ENCODE measurements at regions of chr2 and their contacts with region 1.

Region 1: DNA sequence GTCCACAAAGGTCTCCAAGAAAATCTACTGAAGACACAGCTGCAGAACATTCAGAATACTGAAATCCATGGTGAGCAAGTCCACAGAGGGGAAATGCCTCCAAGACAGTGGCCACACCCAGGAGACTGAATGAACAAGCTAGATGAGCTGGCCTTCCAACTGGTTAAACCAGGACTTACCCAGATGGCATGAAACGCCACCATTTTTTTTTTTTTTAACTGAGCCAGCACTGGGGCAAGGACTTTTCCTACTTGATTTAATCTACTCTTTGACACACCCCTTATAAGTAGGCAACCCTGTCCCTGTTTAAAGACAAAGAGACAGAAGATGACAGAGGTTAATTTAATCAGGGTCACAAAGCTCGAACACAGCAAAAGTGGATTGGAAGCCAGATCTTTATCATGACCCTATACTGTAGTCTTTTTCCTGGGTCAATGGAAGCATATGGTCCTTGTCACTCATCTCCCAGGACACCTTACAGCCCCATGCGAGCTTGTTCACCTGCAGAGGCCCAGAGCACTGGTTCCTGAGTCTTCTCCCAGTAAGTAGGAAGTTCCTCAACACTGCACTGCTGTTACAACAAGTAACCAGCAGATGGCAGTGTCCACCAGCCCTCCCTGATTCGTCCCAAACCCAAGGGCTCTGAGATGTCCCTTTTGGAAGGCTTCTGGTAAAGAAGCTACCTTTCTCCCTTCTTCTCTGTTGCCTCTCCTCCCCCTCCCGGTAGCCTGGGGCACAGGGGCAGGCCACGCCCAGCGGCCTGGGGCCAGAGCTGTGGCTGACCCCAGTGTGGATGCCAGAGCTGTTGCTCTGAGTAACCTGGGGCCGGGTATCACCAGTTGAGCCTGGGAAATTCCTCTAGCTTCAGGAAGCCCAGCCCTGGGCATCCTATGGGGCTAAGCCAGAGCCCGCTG is 5.6 kb upstream of the GDF7 start:
- DNase-seq: peak in 4 of 5 donors; percentile 64 to 69 (median 68)
- H3K4me3 ChIP-seq: no peak overlapping the region
- H3K4me3 Mint-ChIP-seq: peak overlapping the region in 1 of 8 donors; percentile 43
- H3K27ac ChIP-seq: no peak overlapping the region
- H3K27ac Mint-ChIP-seq: peak overlapping the region in 1 of 7 donors; percentile 25
- H3K4me1 ChIP-seq: peaks cover 12% of the 10 kb centered on the region
- H3K4me1 Mint-ChIP-seq: peaks cover 3 to 14% (median 10%) of the 10 kb centered on the region in 4 donors
- H3K27me3 ChIP-seq: peaks cover 26% of the 10 kb centered on the region
- H3K27me3 Mint-ChIP-seq: peaks cover 43 to 49% of the 10 kb centered on the region in 2 donors

Region 2: GRCh38 chr2:20573620-20574422 is 87.5 kb before region 1 on chr2:
- CTCF ChIA-PET with region 1: interaction called, 12 read pairs
- POLR2A ChIA-PET with region 1: no interaction called
- intact Hi-C with region 1: no loop called
- DNase-seq: no peak
- H3K4me3 ChIP-seq: no peak overlapping the region
- H3K4me3 Mint-ChIP-seq: no peak overlapping the region
- H3K27ac ChIP-seq: no peak overlapping the region
- H3K27ac Mint-ChIP-seq: peak overlapping the region in 4 of 7 donors; percentile 19 to 79 (median 62)
- H3K4me1 ChIP-seq: peaks cover 18% of the 10 kb centered on the region
- H3K4me1 Mint-ChIP-seq: peaks cover 11 to 17% (median 14%) of the 10 kb centered on the region in 4 donors
- H3K27me3 ChIP-seq: no peaks in the 10 kb centered on the region
- H3K27me3 Mint-ChIP-seq: no peaks in the 10 kb centered on the region

Region 3: DNA sequence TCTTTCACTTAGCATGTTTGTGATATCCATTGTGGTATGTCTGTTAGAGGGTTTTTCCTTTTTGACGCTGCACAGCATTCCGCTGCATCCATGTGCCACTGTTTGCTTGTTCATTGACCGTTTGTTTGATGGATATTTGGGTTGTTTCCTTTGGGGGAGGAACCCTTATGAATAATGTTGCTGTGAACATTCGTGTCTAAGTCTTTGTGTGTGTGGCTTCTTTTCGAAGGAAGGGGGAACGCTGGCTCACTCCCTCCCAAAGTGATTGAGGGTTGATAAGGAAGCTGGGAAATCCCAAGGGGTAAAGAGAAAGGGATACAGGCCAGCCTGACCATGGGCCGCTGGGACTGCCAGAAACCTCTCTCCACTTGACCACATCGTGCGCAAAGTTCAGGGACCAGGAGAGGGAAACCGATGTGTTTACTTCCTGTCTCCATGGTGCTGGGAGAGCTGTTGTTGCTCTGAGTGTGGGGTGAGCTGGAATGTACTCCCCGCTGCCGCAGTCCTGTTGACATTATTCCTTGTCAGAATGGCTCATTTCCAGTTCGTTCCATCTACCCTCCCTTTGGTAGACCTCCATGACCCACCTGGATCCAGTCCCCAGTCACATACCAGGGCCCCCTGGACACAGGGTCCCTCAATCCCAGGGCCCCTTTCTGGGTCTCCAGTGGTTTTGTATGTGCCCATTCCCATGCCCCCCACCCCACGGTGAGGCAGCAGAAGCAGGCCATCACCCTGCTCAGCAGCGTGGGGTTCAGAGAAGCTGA is 50.1 kb before region 1 on chr2:
- CTCF ChIA-PET with region 1: no interaction called
- POLR2A ChIA-PET with region 1: no interaction called
- intact Hi-C with region 1: no loop called
- DNase-seq: no peak
- H3K4me3 ChIP-seq: no peak overlapping the region
- H3K4me3 Mint-ChIP-seq: no peak overlapping the region
- H3K27ac ChIP-seq: no peak overlapping the region
- H3K27ac Mint-ChIP-seq: no peak overlapping the region
- H3K4me1 ChIP-seq: no peaks in the 10 kb centered on the region
- H3K4me1 Mint-ChIP-seq: no peaks in the 10 kb centered on the region
- H3K27me3 ChIP-seq: no peaks in the 10 kb centered on the region
- H3K27me3 Mint-ChIP-seq: no peaks in the 10 kb centered on the region

Region 4: DNA sequence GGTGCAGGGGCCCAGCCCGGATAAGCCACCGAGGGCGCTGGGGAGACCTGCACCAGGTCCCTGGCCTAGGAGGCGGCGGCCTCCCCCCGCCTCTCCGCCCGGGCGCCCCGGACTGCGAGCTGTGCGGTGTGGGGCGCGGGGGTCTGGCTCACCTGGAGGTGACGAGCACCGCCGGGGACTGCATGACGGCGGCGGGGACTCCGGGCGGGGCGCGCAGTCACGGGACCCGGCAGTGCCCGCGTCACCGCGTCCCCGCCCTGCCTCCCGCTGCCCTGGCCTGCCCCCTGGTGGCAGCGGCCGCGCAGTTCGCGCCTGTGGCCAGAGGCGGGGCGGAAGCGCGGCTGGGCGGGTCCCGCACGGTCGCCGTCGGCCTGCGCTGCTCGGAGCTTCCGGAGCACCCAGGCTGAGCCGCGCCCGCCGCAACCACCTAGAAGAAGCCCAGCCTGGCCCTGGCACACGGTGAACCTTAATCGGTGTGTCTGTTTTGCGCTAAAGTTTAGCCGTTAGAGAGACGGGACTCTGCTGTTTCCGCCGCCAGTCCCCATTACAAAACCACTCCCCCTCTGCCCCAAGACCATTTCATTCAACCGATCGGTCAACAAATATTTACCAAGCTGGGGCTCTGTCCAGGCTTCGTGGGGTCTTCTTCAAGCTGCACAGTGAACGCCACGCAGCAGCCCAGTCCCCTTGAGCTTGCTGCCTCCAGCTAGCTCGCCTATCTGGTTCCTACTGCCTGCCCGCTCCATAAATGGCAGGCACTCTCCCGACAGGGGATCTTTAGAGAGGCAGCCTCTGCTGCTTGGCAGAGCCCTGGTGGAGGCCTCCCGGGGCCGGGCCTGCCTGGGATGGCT is 10.2 kb before region 1 on chr2 and contains the start of gene HS1BP3:
- CTCF ChIA-PET with region 1: interaction called, 76 read pairs
- POLR2A ChIA-PET with region 1: interaction called, 27 read pairs
- intact Hi-C with region 1: no loop called
- DNase-seq: peak; percentile 88 to 98 (median 94)
- H3K4me3 ChIP-seq: peak within 1 kb of the TSS; percentile 50 to 87
- H3K4me3 Mint-ChIP-seq: peak within 1 kb of the TSS; percentile 87 to 93 (median 90)
- H3K27ac ChIP-seq: peak within 1 kb of the TSS; percentile 89
- H3K27ac Mint-ChIP-seq: peak within 1 kb of the TSS; percentile 92 to 98 (median 97)
- H3K4me1 ChIP-seq: peaks cover 20% of the 10 kb centered on the region
- H3K4me1 Mint-ChIP-seq: peaks cover 22 to 42% (median 36%) of the 10 kb centered on the region in 4 donors
- H3K27me3 ChIP-seq: no peaks in the 10 kb centered on the region
- H3K27me3 Mint-ChIP-seq: no peaks in the 10 kb centered on the region
- total RNA-seq, gene HS1BP3: 20.1 TPM

Region 5: DNA sequence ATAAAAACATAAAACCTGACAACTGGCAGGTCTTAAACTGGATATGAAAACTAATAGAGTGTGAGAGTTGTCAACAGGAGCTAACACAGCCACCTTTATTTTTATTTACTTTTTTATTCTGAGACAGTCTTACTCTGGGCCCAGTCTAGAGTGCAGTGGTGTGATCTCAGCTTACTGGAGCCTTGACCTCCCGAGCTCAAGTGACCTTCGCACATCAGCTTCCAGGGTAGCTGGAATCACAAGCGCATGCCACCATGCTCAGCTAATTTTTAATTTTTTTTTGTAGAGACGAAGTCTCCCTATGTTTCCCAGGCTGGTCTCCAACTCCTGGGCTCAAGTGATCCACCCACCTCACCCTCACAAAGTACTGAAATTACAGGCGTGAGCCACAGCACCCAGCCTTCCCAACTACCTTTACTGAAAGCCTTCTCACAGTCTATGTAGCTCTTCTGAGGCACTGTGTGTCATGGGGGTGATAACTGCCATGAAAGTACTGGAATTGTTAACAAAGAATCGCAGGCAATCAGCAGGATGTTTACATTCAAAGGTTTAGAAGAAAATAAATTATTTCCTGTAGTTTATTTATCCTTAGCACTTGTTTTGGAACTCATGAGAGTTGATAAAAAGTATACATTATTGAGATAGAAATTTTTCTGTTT is 29.9 kb after region 1 on chr2:
- CTCF ChIA-PET with region 1: interaction called, 11 read pairs
- POLR2A ChIA-PET with region 1: no interaction called
- intact Hi-C with region 1: no loop called
- DNase-seq: no peak
- H3K4me3 ChIP-seq: no peak overlapping the region
- H3K4me3 Mint-ChIP-seq: peak overlapping the region in 1 of 8 donors; percentile 34
- H3K27ac ChIP-seq: no peak overlapping the region
- H3K27ac Mint-ChIP-seq: peak overlapping the region in 1 of 7 donors; percentile 17
- H3K4me1 ChIP-seq: no peaks in the 10 kb centered on the region
- H3K4me1 Mint-ChIP-seq: no peaks in the 10 kb centered on the region
- H3K27me3 ChIP-seq: no peaks in the 10 kb centered on the region
- H3K27me3 Mint-ChIP-seq: no peaks in the 10 kb centered on the region

Region 6: GRCh38 chr2:20962939-20963557 is 301.7 kb after region 1 on chr2:
- CTCF ChIA-PET with region 1: interaction called, 246 read pairs
- POLR2A ChIA-PET with region 1: interaction called, 5 read pairs
- intact Hi-C with region 1: loop called (anchors 1 kb)
- DNase-seq: peak; percentile 47 to 55 (median 53)
- H3K4me3 ChIP-seq: no peak overlapping the region
- H3K4me3 Mint-ChIP-seq: no peak overlapping the region
- H3K27ac ChIP-seq: no peak overlapping the region
- H3K27ac Mint-ChIP-seq: no peak overlapping the region
- H3K4me1 ChIP-seq: no peaks in the 10 kb centered on the region
- H3K4me1 Mint-ChIP-seq: no peaks in the 10 kb centered on the region
- H3K27me3 ChIP-seq: no peaks in the 10 kb centered on the region
- H3K27me3 Mint-ChIP-seq: peaks cover 9 to 29% of the 10 kb centered on the region in 2 donors

Region 7: DNA sequence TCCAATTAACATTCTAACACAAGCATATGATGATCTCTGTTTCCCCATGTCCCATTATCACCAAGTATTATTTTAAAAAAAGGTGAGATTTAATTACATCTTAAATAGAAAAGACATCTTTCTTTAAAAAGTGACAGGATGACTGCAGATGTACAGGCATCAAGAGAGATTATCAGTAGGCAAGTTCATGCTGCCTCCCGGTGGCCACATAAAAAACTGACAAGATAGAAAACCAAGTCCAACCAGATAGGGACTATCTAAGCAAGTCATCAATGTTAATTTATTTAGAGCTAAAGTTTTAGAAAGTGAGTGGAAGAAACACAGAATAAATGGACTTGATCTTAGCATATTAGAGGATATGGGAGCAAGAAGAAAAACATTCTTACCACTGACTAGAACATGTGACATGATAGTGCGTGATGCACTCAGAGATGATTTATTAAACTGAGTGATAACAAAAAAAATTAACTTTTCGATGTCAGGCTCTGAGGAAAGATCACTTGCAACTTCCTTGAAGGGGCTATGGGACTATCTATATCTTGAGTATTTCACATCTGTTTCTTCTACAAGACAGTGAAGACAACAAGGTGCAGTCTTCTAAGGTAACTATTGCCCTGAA is 457.1 kb after region 1 on chr2:
- CTCF ChIA-PET with region 1: interaction called, 4 read pairs
- POLR2A ChIA-PET with region 1: no interaction called
- intact Hi-C with region 1: loop called (anchors 5 kb)
- DNase-seq: peak in 2 of 5 donors; percentile 2
- H3K4me3 ChIP-seq: no peak overlapping the region
- H3K4me3 Mint-ChIP-seq: no peak overlapping the region
- H3K27ac ChIP-seq: no peak overlapping the region
- H3K27ac Mint-ChIP-seq: no peak overlapping the region
- H3K4me1 ChIP-seq: no peaks in the 10 kb centered on the region
- H3K4me1 Mint-ChIP-seq: no peaks in the 10 kb centered on the region
- H3K27me3 ChIP-seq: no peaks in the 10 kb centered on the region
- H3K27me3 Mint-ChIP-seq: peaks cover 2 to 9% of the 10 kb centered on the region in 2 donors

Measured in CD4-positive, alpha-beta memory T cell (primary cell).